Common myeloid progenitor, CD34-positive (primary cell): ENCODE measurements at regions of chr7 and their contacts with region 1.

Region 1: DNA sequence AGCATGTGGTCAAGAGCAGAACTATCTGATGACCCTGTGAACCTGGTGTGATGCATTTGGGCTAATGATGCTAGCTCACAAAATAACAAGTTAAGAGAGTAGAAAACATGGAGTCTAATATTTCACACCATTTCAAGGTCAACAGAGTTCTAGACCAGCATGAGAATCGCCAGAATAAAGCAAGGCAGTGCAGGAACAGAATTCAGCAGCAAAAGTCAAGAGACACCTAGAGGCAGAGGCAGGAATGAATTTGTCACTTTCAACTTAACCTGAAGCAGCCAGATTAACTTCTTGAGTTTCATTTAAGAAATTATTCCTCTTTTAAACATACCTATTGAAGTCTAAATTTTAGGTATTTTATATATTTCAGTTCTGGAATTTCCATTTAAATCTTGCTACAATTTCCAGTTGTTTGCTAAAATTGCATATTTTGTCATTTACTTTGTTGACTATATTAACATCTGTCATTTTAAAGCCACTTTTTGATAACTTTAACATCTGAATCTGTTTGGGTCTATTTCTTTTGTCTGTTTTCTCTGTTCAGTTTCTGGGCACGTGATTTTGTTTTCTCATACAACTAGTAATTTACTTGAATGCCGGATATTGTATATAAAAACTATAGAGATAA is 44.2 kb upstream of the PRSS58 start:
- DNase-seq: peak in 2 of 3 donors; percentile 71
- H3K4me3 ChIP-seq: no peak overlapping the region
- H3K27ac ChIP-seq: no peak overlapping the region
- H3K4me1 ChIP-seq: peaks cover 29 to 75% (median 58%) of the 10 kb centered on the region in 4 experiments
- H3K27me3 ChIP-seq: no peaks in the 10 kb centered on the region

Region 2: DNA sequence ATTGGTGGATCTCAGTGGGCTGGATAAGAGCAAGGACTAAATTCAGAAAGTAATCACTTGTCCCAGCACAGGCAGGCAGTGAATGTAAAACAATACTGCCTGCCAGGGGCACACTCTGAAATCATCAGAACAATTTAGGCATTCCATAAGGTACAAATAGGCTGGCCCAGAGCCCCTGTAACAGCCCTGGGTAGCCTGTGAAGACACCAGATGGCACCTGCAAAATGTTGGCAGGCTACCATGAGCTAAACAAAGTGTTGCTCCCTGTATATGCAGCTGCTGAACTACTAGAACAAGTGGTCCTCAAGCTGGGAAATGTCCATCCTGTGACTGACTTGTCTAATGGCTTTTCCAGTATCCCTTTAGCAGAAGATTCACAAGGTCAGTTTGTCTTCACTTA is 457.8 kb before region 1 on chr7:
- CTCF ChIA-PET with region 1: no interaction called
- POLR2A ChIA-PET with region 1: no interaction called
- DNase-seq: no peak
- H3K4me3 ChIP-seq: no peak overlapping the region
- H3K27ac ChIP-seq: no peak overlapping the region
- H3K4me1 ChIP-seq: no peaks in the 10 kb centered on the region
- H3K27me3 ChIP-seq: no peaks in the 10 kb centered on the region

Region 3: DNA sequence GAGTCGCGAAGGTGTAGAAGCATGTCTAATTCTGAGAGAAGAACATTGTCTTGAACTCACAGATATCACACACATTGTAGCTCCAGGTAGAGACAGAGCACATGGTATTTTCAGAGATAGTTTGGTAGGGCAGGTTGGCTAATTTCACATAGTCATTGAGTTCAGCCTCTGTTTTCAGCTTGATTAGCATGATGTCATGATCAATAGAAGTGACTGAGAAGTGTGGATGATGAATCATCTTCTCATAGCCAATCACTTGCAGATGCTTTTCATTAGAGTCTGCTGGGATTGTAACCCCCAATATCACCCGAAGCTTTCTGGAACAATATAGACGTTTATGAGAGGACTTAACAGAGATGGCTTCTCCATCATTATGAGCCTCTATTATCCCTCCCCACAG is 47.0 kb before region 1 on chr7:
- CTCF ChIA-PET with region 1: no interaction called
- POLR2A ChIA-PET with region 1: no interaction called
- DNase-seq: no peak
- H3K4me3 ChIP-seq: no peak overlapping the region
- H3K27ac ChIP-seq: no peak overlapping the region
- H3K4me1 ChIP-seq: no peaks in the 10 kb centered on the region
- H3K27me3 ChIP-seq: no peaks in the 10 kb centered on the region

Region 4: DNA sequence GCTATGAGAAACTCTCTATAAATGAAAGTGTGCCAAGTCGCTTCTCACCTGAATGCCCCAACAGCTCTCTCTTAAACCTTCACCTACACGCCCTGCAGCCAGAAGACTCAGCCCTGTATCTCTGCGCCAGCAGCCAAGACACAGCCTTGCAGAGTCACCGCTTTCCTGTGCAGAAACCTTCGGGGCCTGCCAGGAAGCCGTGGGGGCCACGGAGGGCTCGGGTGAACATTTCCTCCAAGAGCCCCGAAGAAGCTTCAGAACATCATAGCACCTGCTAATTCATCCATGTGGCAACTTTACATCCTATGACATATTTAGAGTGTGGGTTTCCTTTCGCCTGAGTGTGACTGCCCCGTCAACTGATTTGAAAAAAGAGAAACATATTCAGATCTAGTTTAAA is 11.5 kb after region 1 on chr7:
- CTCF ChIA-PET with region 1: interaction called, 231 read pairs
- POLR2A ChIA-PET with region 1: interaction called, 12 read pairs
- DNase-seq: peak; percentile 87 to 99 (median 97)
- H3K4me3 ChIP-seq: peak overlapping the region in 2 of 7 experiments; percentile 45 to 49
- H3K27ac ChIP-seq: peak overlapping the region; percentile 10 to 59
- H3K4me1 ChIP-seq: peaks cover 12 to 47% (median 43%) of the 10 kb centered on the region in 4 experiments
- H3K27me3 ChIP-seq: no peaks in the 10 kb centered on the region

Region 5: DNA sequence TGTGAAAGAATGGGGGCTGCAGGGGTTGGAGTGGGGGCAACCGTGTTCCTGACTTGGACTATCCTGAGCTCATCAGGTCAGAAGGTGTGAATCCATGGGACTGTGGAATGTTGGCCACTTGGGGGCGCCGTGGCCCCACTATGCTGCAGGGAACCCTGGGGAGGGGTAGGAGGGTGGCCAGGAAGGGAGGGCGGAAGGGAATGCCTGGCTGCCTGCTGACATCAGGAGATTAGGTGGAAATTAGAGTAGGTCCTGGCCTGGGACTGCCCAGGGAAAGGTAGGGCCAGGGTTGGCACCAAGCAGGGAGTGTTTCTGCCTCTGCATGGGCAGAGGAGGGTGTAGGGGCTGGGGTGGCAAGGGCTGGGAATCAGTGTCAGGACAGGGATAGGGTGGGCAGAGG is 21.7 kb after region 1 on chr7:
- CTCF ChIA-PET with region 1: interaction called, 231 read pairs
- POLR2A ChIA-PET with region 1: interaction called, 3 read pairs
- DNase-seq: peak; percentile 46 to 56 (median 55)
- H3K4me3 ChIP-seq: no peak overlapping the region
- H3K27ac ChIP-seq: no peak overlapping the region
- H3K4me1 ChIP-seq: peaks cover 8 to 77% (median 63%) of the 10 kb centered on the region in 4 experiments
- H3K27me3 ChIP-seq: no peaks in the 10 kb centered on the region

Region 6: GRCh38 chr7:142338633-142339501 is 36.8 kb after region 1 on chr7:
- CTCF ChIA-PET with region 1: interaction called, 156 read pairs
- POLR2A ChIA-PET with region 1: no interaction called
- DNase-seq: peak in 2 of 3 donors; percentile 57 to 64
- H3K4me3 ChIP-seq: no peak overlapping the region
- H3K27ac ChIP-seq: no peak overlapping the region
- H3K4me1 ChIP-seq: peaks cover 0 to 10% (median 3%) of the 10 kb centered on the region in 4 experiments
- H3K27me3 ChIP-seq: no peaks in the 10 kb centered on the region

Region 7: DNA sequence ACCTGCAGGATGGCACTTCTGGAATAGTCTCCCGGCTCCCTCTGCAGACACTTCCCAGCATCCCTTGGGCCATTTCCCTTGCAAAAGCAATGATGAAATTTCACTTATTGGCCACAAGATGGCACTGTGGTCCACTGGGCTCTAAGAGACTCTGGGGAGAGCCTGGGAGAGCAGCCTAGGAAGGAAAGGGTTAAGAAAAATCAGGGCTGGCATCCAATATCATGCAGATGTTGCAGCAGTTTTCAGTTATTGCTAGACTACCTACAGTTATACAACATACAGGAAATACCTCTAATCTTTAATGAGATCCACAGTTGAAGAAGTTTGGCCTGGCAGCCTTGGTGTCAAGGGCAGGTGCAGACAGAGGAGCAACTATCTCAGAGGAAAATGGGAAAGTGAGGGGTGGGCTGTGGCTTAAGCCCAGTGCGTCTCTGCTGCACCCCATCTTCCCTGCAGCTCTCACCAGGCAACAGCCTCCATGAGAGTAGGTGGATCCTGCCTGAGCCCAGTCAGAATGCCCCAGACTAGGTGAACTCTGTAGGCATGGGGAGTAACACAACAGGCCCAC is 56.0 kb after region 1 on chr7:
- CTCF ChIA-PET with region 1: interaction called, 115 read pairs
- POLR2A ChIA-PET with region 1: no interaction called
- DNase-seq: peak; percentile 77 to 92 (median 92)
- H3K4me3 ChIP-seq: no peak overlapping the region
- H3K27ac ChIP-seq: no peak overlapping the region
- H3K4me1 ChIP-seq: peaks cover 5 to 36% (median 22%) of the 10 kb centered on the region in 4 experiments
- H3K27me3 ChIP-seq: no peaks in the 10 kb centered on the region

Region 8: DNA sequence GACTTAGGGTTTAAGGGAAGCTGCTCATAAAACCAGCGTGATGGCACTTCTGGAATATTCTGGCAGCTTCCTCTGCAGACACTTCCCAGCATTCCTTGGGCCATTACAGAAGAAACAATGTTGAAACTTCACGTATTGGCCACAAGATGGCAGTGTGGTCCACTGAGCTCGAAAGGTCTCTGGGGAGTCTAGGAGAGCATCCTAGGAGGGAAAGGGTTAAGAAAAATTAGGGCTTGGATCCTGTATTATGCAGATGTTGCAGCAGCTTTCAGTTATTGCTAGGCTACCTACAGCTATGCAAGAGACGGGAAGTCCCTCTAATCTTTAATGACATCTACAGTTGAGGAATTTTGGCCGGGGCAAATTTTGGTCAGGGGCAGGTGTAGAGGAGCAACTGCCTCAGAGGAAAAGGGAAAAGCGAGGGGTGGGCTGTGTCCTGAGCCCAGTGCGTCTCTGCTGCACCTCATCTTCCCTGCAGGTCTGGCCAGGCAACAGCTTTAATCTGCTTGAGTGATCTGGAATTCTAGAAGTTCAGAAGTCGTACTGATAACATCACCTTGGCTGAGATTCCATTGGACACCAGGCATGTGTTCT is 176.5 kb after region 1 on chr7:
- CTCF ChIA-PET with region 1: interaction called, 13 read pairs
- POLR2A ChIA-PET with region 1: no interaction called
- DNase-seq: peak; percentile 57 to 68 (median 66)
- H3K4me3 ChIP-seq: no peak overlapping the region
- H3K27ac ChIP-seq: no peak overlapping the region
- H3K4me1 ChIP-seq: peaks cover 15 to 91% (median 76%) of the 10 kb centered on the region in 4 experiments
- H3K27me3 ChIP-seq: no peaks in the 10 kb centered on the region

Region 9: DNA sequence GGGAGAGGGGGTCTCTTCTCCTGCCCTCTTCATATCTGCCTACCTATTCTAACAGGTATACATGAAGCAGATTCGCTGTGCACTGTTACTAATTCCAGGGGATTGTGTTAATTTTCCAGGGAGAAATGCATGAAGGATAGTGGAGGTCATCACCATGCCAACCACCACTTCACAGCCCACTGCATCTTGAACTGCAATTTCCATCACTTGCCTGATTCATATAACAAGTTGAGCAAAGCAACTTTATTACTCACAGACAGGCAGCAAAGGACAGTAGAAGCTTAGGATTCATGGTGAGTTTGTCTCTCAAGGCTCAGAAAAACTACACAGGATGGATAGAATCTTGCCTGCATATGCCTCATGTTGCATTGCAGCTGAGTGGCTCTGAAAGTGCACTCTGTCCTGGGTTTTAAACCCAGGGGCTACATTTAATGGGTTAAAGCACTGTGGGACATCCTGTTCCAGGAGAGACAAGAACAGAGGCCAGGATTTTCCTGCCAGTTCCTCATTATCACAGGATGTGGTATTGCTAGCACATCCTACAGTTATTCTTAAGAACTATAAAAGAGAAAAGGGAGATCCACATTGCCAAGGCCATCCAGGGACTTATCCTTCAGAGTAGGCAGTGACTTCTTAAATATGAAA is 310.3 kb after region 1 on chr7:
- CTCF ChIA-PET with region 1: no interaction called
- POLR2A ChIA-PET with region 1: no interaction called
- DNase-seq: no peak
- H3K4me3 ChIP-seq: no peak overlapping the region
- H3K27ac ChIP-seq: no peak overlapping the region
- H3K4me1 ChIP-seq: peaks cover 2 to 52% (median 39%) of the 10 kb centered on the region in 4 experiments
- H3K27me3 ChIP-seq: no peaks in the 10 kb centered on the region